ENCODE measurements at regions of chr6 and their contacts with region 1.

Region 1: GRCh38 chr6:144013486-144013909 is 5.4 kb upstream of the PLAGL1 start:
- DNase-seq: peak; percentile 69 to 75
- ATAC-seq: peak in 7 of 8 donors; percentile 33 to 70 (median 59)
- H3K4me3 ChIP-seq: peak overlapping the region in 1 of 10 donors; percentile 0
- H3K27ac ChIP-seq: no peak overlapping the region
- H3K4me1 ChIP-seq: peaks cover 0 to 7% (median 0%) of the 10 kb centered on the region in 9 donors
- H3K27me3 ChIP-seq: no peaks in the 10 kb centered on the region
- CTCF ChIP-seq: peak; percentile 86 to 97 (median 94)

Region 2: GRCh38 chr6:143510991-143511891 is 502.3 kb before region 1 on chr6 and contains the start of gene FUCA2:
- intact Hi-C with region 1: loop called in 1 of 10 experiments (anchors 5 kb)
- DNase-seq: peak; percentile 94 to 95
- ATAC-seq: peak; percentile 90 to 95 (median 92)
- H3K4me3 ChIP-seq: peak within 1 kb of the TSS; percentile 53 to 83 (median 74)
- H3K27ac ChIP-seq: peak within 1 kb of the TSS; percentile 74 to 96 (median 90)
- H3K4me1 ChIP-seq: peaks cover 3 to 56% (median 29%) of the 10 kb centered on the region in 9 donors
- H3K27me3 ChIP-seq: no peaks in the 10 kb centered on the region
- CTCF ChIP-seq: peak in 2 of 9 donors; percentile 19 to 25
- total RNA-seq, gene FUCA2: 32.8 to 63.4 (median 40.1) TPM

Region 3: DNA sequence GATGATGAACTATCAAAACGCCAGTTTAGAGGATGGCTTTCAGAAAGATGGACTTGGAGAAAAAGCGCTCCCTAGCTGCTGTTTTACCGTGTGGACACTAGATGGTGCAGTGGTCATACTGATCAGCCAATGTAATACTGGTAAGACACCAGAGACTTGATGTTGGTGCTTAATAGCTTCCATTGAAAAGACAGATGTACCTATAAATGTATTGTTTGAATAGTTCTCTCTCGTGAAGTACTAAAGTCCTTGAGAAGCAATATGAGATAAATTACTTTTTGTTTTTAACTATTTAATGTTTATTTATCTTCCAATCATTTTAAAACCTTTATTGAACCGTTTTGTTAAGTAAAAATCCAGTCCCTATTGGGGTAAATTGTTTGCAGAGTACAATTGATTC is 438.1 kb before region 1 on chr6:
- intact Hi-C with region 1: loop called (anchors 1 to 5 kb)
- DNase-seq: peak in 1 of 2 donors; percentile 67
- ATAC-seq: peak; percentile 70 to 92 (median 88)
- H3K4me3 ChIP-seq: no peak overlapping the region
- H3K27ac ChIP-seq: peak overlapping the region in 4 of 10 donors; percentile 18 to 59 (median 38)
- H3K4me1 ChIP-seq: peaks cover 0 to 16% (median 0%) of the 10 kb centered on the region in 9 donors
- H3K27me3 ChIP-seq: no peaks in the 10 kb centered on the region
- CTCF ChIP-seq: peak; percentile 74 to 97 (median 91)

Region 4: DNA sequence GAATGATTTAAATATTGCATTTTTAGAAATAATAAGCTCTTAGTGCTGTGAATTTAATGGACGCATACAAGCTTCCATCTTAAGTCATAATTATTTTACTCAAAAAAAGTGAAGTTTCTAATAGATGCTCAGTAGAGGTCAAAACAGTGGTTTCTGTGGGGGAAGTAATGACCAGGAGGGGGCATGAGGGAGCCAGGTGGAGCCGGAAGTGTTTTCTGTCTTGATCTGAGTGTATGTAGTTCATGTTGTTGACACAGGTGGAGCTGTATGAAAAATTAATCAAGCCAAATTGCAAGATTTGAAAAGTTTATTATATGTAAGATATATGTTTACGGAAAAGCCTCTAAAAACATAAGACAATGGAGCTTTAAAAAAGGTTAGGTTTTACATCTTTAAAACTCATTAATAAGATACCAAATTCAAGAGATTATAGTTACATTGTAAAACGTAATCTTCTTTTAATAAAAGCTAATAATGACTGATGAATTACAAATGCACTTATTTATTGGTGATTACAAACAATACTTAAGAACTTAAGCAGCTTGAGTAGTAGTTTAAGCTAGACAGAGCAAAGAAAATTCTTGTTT is 73.4 kb before region 1 on chr6:
- intact Hi-C with region 1: loop called (anchors 2 to 10 kb)
- DNase-seq: no peak
- ATAC-seq: peak in 1 of 8 donors; percentile 39
- H3K4me3 ChIP-seq: no peak overlapping the region
- H3K27ac ChIP-seq: no peak overlapping the region
- H3K4me1 ChIP-seq: peaks cover 0 to 8% (median 0%) of the 10 kb centered on the region in 9 donors
- H3K27me3 ChIP-seq: no peaks in the 10 kb centered on the region
- CTCF ChIP-seq: peak in 8 of 9 donors; percentile 40 to 67 (median 58)

Region 5: DNA sequence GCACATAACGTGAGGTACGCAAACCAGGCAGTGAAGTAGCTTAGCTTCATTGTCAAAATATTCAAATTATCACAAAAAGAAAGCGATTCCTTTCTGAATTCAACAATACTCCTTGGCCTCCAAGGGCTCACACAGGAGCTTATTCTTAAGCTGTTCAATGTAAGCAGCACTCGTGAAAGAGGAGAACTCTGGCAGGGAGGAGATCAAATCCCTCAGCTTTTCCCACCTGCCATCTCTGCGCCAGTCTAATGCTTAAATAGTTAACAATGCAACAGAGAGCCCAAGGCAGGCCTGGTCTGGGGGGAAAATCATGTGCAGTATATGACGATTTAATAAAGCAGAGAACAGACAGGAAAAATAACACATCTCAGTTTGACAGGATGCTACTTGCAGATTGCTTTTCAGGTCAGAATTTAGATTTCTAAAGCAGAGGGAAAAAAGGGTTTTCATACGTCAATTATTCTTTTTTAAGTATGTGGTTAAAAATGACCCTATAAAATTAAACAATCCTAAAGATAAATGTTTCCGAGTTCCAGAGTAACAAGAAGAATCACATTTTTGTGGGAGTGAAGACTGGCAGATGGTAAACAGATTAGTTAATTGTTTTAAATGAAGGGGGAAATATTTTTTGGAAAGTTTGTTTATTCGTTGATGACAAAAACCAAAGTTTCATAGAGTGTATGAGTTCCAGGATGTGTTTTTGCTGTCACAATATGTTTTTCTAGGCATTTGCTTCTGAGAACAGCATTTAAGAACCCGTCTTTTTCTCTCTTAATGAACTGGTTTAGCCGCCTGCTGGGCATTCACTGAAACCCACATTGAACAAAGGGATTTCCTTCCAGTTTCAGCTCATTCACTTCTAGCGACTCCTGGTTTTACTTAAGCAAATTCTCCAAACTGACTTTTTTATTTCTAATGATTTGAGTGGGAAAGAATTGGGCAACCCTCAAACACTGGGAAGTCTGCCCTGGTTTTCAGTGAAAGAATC is 51.3 kb before region 1 on chr6:
- intact Hi-C with region 1: loop called in 1 of 10 experiments (anchors 5 kb)
- DNase-seq: no peak
- ATAC-seq: peak in 3 of 8 donors; percentile 20 to 32 (median 25)
- H3K4me3 ChIP-seq: no peak overlapping the region
- H3K27ac ChIP-seq: peak overlapping the region in 4 of 10 donors; percentile 1 to 55 (median 26)
- H3K4me1 ChIP-seq: peaks cover 0 to 47% (median 28%) of the 10 kb centered on the region in 9 donors
- H3K27me3 ChIP-seq: no peaks in the 10 kb centered on the region
- CTCF ChIP-seq: peak in 7 of 9 donors; percentile 18 to 55 (median 32)

Measured in heart right ventricle (tissue), 16 donors.